CD8-positive, alpha-beta T cell (primary cell): ENCODE measurements at regions of chr5 and their contacts with region 1.

Region 1: DNA sequence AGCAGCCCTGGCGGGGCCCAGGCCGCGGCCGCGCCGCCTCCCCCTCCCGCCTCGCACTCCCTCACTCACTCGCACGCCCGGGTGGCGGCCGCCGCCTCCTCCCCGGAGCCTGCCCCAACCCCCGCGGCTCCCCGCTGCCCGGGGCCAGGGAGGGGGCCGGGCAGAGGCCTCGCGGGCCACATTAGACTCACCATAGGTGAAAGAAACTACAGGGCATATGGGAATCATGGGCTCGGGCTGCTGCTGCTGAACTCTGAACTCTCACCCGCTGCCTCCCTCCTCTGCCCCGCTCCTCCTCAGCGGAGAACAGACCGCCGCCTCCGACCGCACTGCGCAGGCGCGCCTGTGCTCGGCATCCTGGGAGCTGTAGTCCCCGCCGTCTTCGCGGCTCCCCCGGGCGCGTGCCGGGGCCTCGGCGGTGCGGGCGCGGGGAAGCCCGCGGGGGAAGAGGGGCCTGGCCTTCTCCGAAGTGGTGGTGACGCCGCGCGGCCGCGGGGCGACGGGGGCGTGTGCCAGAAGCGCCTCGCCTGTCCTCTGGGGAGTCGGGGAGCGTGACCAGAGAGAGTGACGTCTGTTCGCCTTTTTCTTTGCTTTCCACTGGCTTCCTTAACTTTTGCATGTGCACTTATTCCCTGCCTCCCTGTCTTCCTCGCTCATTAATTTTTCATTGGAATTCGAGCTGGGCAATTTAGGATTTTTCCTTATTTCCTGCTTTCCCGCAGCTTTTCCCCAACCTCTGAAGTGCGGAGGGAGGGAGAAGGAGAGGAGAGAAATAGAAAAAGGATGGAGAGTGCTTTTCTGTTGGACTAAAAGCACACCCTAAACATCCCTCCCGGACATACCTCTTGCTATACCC is at the start of gene ZFR:
- DNase-seq: peak; percentile 86 to 97 (median 92)
- ATAC-seq: peak; percentile 88
- H3K4me3 ChIP-seq: peak within 1 kb of the TSS; percentile 95 to 97
- H3K4me3 Mint-ChIP-seq: peak within 1 kb of the TSS; percentile 90
- H3K27ac ChIP-seq: peak within 1 kb of the TSS; percentile 81 to 90
- H3K27ac Mint-ChIP-seq: peak within 1 kb of the TSS; percentile 95
- H3K4me1 ChIP-seq: peaks cover 30% of the 10 kb centered on the region
- H3K4me1 Mint-ChIP-seq: peaks cover 27% of the 10 kb centered on the region
- H3K27me3 ChIP-seq: no peaks in the 10 kb centered on the region
- H3K27me3 Mint-ChIP-seq: no peaks in the 10 kb centered on the region
- CTCF ChIP-seq: no peak
- total RNA-seq, gene ZFR: 54.0 to 62.9 TPM

Region 2: GRCh38 chr5:31531888-31532710 is 912.6 kb before region 1 on chr5 and contains the starts of genes C5orf22 and DROSHA:
- CTCF ChIA-PET with region 1: no interaction called
- POLR2A ChIA-PET with region 1: no interaction called
- intact Hi-C with region 1: loop called in 1 of 2 experiments (anchors 2 kb)
- DNase-seq: peak; percentile 72 to 96 (median 91)
- ATAC-seq: peak; percentile 97
- H3K4me3 ChIP-seq: peak within 1 kb of the TSS; percentile 87 to 91
- H3K4me3 Mint-ChIP-seq: peak within 1 kb of the TSS; percentile 99
- H3K27ac ChIP-seq: peak within 1 kb of the TSS; percentile 63 to 75
- H3K27ac Mint-ChIP-seq: peak within 1 kb of the TSS; percentile 92
- H3K4me1 ChIP-seq: peaks cover 34% of the 10 kb centered on the region
- H3K4me1 Mint-ChIP-seq: peaks cover 59% of the 10 kb centered on the region
- H3K27me3 ChIP-seq: no peaks in the 10 kb centered on the region
- H3K27me3 Mint-ChIP-seq: no peaks in the 10 kb centered on the region
- CTCF ChIP-seq: no peak
- total RNA-seq, gene C5orf22: 11.4 to 14.2 TPM
- total RNA-seq, gene DROSHA: 18.6 to 21.6 TPM

Region 3: GRCh38 chr5:32975656-32976375 is 531.2 kb after region 1 on chr5:
- CTCF ChIA-PET with region 1: no interaction called
- POLR2A ChIA-PET with region 1: no interaction called
- intact Hi-C with region 1: no loop called
- DNase-seq: no peak
- ATAC-seq: no peak
- H3K4me3 ChIP-seq: no peak overlapping the region
- H3K4me3 Mint-ChIP-seq: no peak overlapping the region
- H3K27ac ChIP-seq: no peak overlapping the region
- H3K27ac Mint-ChIP-seq: no peak overlapping the region
- H3K4me1 ChIP-seq: no peaks in the 10 kb centered on the region
- H3K4me1 Mint-ChIP-seq: no peaks in the 10 kb centered on the region
- H3K27me3 ChIP-seq: no peaks in the 10 kb centered on the region
- H3K27me3 Mint-ChIP-seq: peaks cover 4% of the 10 kb centered on the region
- CTCF ChIP-seq: no peak